ENCODE measurements at regions of chr9 and their contacts with region 1.

Region 1: DNA sequence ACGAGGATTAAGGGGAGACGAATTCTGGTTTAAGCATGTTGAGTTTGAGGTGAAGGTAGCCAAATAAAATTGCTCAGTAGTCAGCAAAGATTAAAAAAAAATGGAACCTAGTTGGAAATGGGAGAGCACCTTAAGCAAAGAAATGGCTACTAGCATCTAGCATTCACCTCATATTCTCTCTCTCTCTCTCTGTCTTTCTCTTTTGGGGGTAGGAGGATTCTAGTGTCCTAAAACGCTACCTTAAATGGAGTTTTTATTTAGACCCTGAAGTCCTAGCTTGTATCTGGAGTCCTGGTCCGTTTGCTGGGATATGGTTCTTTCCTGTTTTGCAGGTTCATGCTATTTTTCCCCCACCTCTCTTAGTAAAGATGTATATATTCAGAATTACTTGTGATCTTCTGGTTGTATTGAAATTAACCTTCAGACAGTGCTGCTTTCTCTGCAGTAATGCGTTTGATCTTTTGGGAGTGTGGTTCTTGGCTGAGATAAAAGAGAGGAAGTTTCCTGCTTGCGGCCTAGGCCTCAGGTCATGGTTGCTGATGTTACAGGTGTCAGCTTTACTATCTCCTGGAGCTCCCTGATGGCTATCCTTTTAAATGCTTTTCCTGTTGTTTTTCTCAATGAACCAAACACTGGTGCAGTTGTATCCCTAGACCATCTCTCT is 8.0 kb downstream of the TGFBR1 start:
- DNase-seq: peak; percentile 44
- H3K4me3 Mint-ChIP-seq: peak overlapping the region; percentile 31
- H3K27ac Mint-ChIP-seq: peak overlapping the region; percentile 55
- H3K4me1 Mint-ChIP-seq: peaks cover 77% of the 10 kb centered on the region
- H3K27me3 Mint-ChIP-seq: no peaks in the 10 kb centered on the region

Region 2: GRCh38 chr9:99140685-99141314 is 27.9 kb after region 1 on chr9:
- CTCF ChIA-PET with region 1: interaction called, 10 read pairs
- POLR2A ChIA-PET with region 1: interaction called, 4 read pairs
- DNase-seq: peak; percentile 48
- H3K4me3 Mint-ChIP-seq: no peak overlapping the region
- H3K27ac Mint-ChIP-seq: no peak overlapping the region
- H3K4me1 Mint-ChIP-seq: peaks cover 31% of the 10 kb centered on the region
- H3K27me3 Mint-ChIP-seq: no peaks in the 10 kb centered on the region

Region 3: GRCh38 chr9:99211741-99212140 is 98.9 kb after region 1 on chr9:
- CTCF ChIA-PET with region 1: no interaction called
- POLR2A ChIA-PET with region 1: no interaction called
- DNase-seq: no peak
- H3K4me3 Mint-ChIP-seq: no peak overlapping the region
- H3K27ac Mint-ChIP-seq: no peak overlapping the region
- H3K4me1 Mint-ChIP-seq: peaks cover under 1% of the 10 kb centered on the region
- H3K27me3 Mint-ChIP-seq: peaks cover 24% of the 10 kb centered on the region

Measured in activated CD4-positive, alpha-beta memory T cell treated with anti-CD3 and anti-CD28 coated beads, Interleukin-2, amount 10 ng/mL, durations not matched to agents 7 days and 5 days (primary cell).